CD8-positive, alpha-beta T cell (primary cell): ENCODE measurements at regions of chr4 and their contacts with region 1.

Region 1: DNA sequence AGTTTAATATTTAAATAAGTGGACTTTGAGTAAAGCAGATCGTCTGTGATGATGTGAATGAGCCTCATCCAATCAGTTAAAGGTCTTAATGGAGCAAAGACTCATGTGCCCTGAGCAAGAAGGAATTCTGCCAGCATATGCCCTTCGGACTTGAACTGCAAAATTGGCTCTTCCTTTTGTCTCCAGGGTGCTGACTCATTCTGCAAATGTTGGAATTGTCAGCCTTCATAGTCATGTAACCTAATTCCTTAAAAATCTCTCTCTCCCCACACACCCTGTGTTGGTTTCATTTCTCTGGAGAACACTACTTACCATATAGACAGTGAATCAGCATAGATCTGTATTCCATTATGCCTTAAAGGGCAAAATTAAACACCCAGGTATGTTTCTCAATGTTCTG is 609.8 kb upstream of the GALNTL6 start:
- DNase-seq: no peak
- ATAC-seq: no peak
- H3K4me3 ChIP-seq: no peak overlapping the region
- H3K4me3 Mint-ChIP-seq: no peak overlapping the region
- H3K27ac ChIP-seq: no peak overlapping the region
- H3K27ac Mint-ChIP-seq: no peak overlapping the region
- H3K4me1 ChIP-seq: no peaks in the 10 kb centered on the region
- H3K4me1 Mint-ChIP-seq: no peaks in the 10 kb centered on the region
- H3K27me3 ChIP-seq: no peaks in the 10 kb centered on the region
- H3K27me3 Mint-ChIP-seq: no peaks in the 10 kb centered on the region
- CTCF ChIP-seq: no peak

Region 2: DNA sequence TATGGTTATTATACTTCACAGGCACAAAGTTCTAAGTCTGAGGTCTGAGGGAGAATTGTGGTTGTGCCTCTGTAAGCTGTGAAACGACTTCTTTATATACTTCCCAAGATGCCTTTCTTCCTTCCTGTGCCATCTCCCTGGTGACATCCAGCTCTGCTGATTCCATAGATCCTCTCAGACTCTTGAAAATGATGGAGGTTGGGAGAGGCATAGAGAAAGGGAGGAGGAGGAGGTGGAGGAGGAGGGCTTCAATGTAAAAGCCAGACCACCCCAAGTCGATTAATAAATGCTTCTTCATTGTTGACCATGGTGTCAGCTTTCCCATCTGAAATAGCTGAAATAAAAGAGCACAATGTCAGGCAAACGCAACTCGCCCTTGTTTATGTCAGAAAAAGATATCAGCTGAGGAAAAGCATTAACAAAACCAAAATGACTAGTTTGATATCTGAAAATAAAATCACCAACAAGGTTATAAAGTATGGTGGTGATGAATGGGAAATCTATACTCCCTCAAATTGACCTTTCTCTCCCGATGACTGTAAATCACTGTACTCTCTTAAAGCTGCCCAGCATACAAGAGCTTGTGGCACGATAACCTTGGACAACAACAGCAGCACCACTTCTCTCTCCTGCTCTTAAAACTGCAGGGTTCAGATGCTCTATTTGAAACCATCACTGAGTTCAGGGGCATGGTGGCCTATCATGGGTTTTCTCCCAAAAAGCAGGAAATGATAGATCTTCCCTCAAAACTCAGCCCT is 1734.8 kb after region 1 on chr4:
- CTCF ChIA-PET with region 1: no interaction called
- POLR2A ChIA-PET with region 1: no interaction called
- intact Hi-C with region 1: loop called in 1 of 2 experiments (anchors 10 kb)
- DNase-seq: no peak
- ATAC-seq: no peak
- H3K4me3 ChIP-seq: no peak overlapping the region
- H3K4me3 Mint-ChIP-seq: no peak overlapping the region
- H3K27ac ChIP-seq: no peak overlapping the region
- H3K27ac Mint-ChIP-seq: no peak overlapping the region
- H3K4me1 ChIP-seq: no peaks in the 10 kb centered on the region
- H3K4me1 Mint-ChIP-seq: no peaks in the 10 kb centered on the region
- H3K27me3 ChIP-seq: no peaks in the 10 kb centered on the region
- H3K27me3 Mint-ChIP-seq: peaks cover 9% of the 10 kb centered on the region
- CTCF ChIP-seq: no peak